ENCODE measurements at regions of chr9 and their contacts with region 1.

Region 1: GRCh38 chr9:30982301-30982700 is 1402.1 kb upstream of the ACO1 start:
- DNase-seq: no peak
- H3K4me3 ChIP-seq: no peak overlapping the region
- H3K27ac ChIP-seq: no peak overlapping the region
- H3K4me1 ChIP-seq: no peaks in the 10 kb centered on the region
- H3K27me3 ChIP-seq: no peaks in the 10 kb centered on the region
- CTCF ChIP-seq: no peak
- POLR2A ChIP-seq: no peak

Region 2: GRCh38 chr9:30534896-30535295 is 447.4 kb before region 1 on chr9:
- intact Hi-C with region 1: no loop called
- DNase-seq: no peak
- H3K4me3 ChIP-seq: no peak overlapping the region
- H3K27ac ChIP-seq: no peak overlapping the region
- H3K4me1 ChIP-seq: no peaks in the 10 kb centered on the region
- H3K27me3 ChIP-seq: no peaks in the 10 kb centered on the region
- CTCF ChIP-seq: no peak
- POLR2A ChIP-seq: no peak

Region 3: DNA sequence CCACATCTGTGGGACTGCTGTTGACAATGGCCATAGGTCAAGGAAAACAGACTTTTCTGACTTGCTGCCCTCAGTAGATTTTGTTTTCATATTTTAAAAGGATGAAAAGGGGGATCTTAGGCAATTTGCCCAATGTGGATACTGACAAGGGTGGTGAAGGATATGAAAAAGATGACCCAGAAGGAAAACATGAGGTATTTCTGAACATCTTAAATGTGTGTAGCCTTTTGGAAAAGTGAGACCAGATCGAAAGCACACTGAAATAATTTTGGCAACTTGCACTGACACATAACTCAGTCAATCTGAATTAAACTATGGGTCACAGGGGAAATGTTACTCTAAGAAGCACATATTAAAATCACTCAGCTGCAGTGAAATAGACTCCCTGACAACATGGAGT is 390.8 kb before region 1 on chr9:
- intact Hi-C with region 1: no loop called
- DNase-seq: no peak
- H3K4me3 ChIP-seq: no peak overlapping the region
- H3K27ac ChIP-seq: no peak overlapping the region
- H3K4me1 ChIP-seq: no peaks in the 10 kb centered on the region
- H3K27me3 ChIP-seq: no peaks in the 10 kb centered on the region
- CTCF ChIP-seq: no peak
- POLR2A ChIP-seq: no peak

Region 4: DNA sequence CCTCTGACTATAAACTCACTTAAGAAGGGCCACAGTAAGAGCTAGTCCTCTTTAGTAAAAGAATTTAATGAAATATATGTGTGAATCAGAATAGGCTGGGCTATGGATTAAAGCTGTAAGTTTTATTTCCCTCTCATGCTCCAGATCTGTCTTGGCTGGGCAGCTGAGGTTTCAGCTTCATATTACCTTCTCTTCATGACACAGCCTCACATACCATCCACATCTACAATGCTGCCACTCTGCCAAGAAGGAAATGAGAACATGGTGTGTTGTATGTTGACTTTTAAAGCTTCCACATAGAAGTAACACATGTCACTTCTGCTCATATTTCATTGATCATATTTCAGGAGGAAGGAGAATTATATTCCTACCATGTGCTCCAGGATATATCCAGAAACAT is 626.1 kb after region 1 on chr9:
- intact Hi-C with region 1: loop called (anchors 10 kb)
- DNase-seq: no peak
- H3K4me3 ChIP-seq: no peak overlapping the region
- H3K27ac ChIP-seq: no peak overlapping the region
- H3K4me1 ChIP-seq: no peaks in the 10 kb centered on the region
- H3K27me3 ChIP-seq: no peaks in the 10 kb centered on the region
- CTCF ChIP-seq: no peak
- POLR2A ChIP-seq: no peak

Measured in prostate gland (tissue), 2 donors.